MCF 10A (cell line): ENCODE measurements at regions of chr2 and their contacts with region 1.

Region 1: DNA sequence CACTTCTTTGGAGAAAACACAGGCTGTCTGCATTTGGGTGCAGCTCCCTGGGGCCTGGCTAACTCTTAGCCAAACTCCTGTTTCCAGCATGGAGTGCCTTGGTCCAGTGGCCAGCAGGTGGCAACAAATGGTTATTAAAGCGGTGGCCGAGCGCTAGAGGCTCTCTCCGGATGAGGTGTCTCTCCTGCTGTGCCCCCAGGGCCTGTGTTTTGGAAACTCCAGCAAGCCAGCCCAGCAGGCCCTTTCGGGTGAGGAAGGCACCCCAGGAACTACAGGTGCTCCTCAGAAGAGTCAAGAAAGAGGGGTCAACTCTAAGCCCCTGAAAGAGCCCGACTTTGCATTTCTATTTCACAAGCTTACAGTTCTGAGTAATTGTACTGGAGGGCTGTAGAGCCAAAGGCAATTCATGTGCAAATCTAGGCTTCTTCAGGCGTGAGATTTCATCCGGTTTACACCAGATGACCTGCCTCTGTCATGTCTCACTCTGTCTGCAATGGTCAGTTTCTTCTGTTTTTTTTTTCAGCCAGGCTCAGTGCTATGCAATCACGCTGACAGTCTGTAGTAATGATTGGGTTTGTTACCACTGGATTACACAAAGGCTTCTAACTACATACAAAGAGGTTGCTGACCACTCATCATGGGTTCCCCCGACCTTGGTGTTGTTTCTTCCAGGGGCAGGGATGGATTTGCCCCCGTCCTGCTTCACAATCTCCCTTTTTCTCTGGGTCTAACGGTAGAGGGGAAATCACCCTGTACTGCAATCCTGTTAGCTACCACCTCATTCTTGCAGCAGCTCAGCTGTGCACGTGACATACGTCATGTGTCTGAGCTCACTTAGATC is 7.6 kb upstream of the CHRNA1 start:
- DNase-seq: peak; percentile 86
- H3K4me3 Mint-ChIP-seq: no peak overlapping the region
- H3K27ac Mint-ChIP-seq: no peak overlapping the region
- H3K4me1 Mint-ChIP-seq: no peaks in the 10 kb centered on the region
- H3K27me3 Mint-ChIP-seq: no peaks in the 10 kb centered on the region
- CTCF ChIP-seq: peak; percentile 86

Region 2: DNA sequence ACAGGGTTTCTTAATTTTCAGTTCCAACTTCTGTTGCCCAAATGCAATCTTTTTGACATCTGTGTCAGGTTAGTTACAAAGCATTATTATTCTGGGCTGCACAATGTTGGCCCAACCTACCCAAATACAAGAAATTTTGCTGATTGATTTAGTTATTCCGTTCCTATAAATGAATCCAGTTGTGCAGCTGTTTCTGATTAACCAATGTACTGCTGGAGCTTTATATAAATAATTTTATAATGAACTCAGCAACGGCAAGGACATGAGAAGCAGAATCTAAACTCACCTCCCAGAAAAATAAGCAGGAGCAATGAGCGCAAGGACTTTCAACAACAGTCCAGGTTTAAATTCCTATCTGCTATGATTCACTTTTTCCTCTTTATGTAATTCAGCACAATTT is 98.0 kb before region 1 on chr2:
- CTCF ChIA-PET with region 1: no interaction called
- POLR2A ChIA-PET with region 1: no interaction called
- intact Hi-C with region 1: no loop called
- DNase-seq: no peak
- H3K4me3 Mint-ChIP-seq: no peak overlapping the region
- H3K27ac Mint-ChIP-seq: no peak overlapping the region
- H3K4me1 Mint-ChIP-seq: peaks cover 6% of the 10 kb centered on the region
- H3K27me3 Mint-ChIP-seq: no peaks in the 10 kb centered on the region
- CTCF ChIP-seq: no peak

Region 3: DNA sequence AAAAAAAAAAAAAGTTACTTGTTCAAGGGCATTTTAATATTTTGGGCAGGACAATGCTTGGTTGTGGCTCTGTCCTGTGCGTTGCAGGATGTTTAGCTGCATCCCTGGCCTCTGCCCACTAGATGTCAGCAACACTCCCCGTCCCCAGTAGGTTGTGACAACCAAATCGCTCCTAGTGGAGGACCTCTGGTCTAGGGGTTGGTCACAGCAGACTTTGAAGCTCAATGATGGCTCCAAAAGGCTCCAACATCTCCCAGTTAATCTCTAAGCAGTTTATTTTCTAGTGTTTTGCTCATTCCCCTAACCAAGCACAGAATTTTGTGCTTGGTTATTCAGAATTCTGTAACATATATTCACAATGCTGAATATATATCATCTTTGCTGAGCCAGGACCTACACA is 74.6 kb before region 1 on chr2:
- CTCF ChIA-PET with region 1: interaction called, 10 read pairs
- POLR2A ChIA-PET with region 1: no interaction called
- intact Hi-C with region 1: no loop called
- DNase-seq: peak; percentile 69
- H3K4me3 Mint-ChIP-seq: no peak overlapping the region
- H3K27ac Mint-ChIP-seq: no peak overlapping the region
- H3K4me1 Mint-ChIP-seq: peaks cover 5% of the 10 kb centered on the region
- H3K27me3 Mint-ChIP-seq: no peaks in the 10 kb centered on the region
- CTCF ChIP-seq: peak; percentile 52

Region 4: DNA sequence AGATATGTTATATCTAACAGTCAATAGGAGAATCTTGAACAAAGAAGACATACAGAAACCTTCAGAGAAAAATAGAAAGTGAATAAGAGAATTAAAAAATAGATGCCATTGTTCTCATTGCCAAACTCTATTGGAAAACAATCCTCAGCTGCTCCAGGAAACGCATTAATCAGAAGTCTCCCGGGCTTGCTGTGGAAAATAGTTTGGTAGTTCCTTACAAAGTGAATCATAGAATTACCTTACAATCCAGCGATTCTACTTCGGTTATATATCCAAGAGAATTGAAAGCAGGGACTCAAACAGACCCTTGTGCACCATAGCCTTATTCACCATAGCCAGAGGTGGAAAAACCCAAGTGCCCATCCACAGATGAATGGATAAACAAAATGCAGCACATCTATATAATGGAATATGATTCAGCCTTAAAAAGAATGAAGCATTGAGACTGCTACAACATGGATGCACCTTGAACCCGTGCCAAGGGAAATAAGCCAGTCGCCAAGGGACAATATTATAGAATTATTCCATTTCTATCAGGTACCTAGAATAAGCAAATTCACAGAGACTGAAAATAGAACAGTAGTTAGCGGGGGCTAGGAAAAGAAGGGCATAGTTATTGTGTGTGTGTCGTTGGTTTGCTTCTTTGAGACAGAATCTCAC is 14.3 kb after region 1 on chr2:
- CTCF ChIA-PET with region 1: interaction called, 12 read pairs
- POLR2A ChIA-PET with region 1: interaction called, 6 read pairs
- intact Hi-C with region 1: no loop called
- DNase-seq: no peak
- H3K4me3 Mint-ChIP-seq: no peak overlapping the region
- H3K27ac Mint-ChIP-seq: no peak overlapping the region
- H3K4me1 Mint-ChIP-seq: no peaks in the 10 kb centered on the region
- H3K27me3 Mint-ChIP-seq: no peaks in the 10 kb centered on the region
- CTCF ChIP-seq: no peak

Region 5: DNA sequence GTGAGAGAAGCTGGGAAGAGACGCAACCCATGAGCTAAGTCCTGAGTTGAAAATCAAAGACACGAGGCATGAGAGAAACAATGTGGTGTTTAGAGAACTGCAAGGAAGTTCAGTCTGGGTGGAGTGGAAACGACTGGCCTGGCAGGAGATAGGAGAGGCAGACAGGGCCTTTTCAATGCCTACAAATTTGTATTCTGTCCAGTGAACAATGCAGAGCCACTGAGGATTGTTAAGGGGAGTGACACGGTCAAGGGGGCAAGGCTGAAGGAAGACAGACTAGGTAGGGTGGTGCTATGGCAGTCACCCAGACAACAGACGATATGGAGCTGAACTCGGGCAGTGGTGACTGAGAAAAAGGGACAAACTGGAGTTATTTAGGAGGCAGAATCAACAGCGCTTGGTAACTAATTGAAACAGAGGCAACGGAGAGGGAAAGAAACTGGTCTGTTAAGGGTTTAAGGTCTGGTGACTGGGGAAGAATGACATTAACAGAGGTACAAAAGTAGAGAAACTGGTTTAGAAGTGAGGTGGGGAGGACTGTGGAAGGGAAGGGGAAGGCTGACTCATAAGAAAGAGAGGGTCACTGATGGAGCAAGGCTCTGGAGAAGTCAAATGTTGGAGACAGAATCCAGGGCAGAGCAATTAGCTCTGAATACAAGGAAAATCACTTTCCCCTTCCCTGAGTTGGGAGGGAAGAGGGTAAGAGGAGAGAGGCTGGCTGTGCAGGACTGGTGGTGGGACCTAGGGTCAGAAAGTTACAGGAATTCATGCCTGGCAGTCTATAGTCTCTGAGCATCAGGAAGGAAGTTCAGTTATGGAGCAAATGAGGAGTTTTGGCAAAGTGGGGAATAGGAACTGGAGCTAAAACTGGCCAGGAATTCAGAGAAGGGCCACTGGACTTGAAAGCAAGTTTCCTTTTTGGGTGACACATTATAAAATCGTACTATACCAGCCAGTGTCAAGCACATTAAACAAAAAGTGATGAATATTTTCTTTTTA is 55.8 kb after region 1 on chr2:
- CTCF ChIA-PET with region 1: interaction called, 11 read pairs
- POLR2A ChIA-PET with region 1: interaction called, 3 read pairs
- intact Hi-C with region 1: no loop called
- DNase-seq: no peak
- H3K4me3 Mint-ChIP-seq: peak overlapping the region; percentile 5
- H3K27ac Mint-ChIP-seq: peak overlapping the region; percentile 57
- H3K4me1 Mint-ChIP-seq: peaks cover 28% of the 10 kb centered on the region
- H3K27me3 Mint-ChIP-seq: no peaks in the 10 kb centered on the region
- CTCF ChIP-seq: no peak

Region 6: DNA sequence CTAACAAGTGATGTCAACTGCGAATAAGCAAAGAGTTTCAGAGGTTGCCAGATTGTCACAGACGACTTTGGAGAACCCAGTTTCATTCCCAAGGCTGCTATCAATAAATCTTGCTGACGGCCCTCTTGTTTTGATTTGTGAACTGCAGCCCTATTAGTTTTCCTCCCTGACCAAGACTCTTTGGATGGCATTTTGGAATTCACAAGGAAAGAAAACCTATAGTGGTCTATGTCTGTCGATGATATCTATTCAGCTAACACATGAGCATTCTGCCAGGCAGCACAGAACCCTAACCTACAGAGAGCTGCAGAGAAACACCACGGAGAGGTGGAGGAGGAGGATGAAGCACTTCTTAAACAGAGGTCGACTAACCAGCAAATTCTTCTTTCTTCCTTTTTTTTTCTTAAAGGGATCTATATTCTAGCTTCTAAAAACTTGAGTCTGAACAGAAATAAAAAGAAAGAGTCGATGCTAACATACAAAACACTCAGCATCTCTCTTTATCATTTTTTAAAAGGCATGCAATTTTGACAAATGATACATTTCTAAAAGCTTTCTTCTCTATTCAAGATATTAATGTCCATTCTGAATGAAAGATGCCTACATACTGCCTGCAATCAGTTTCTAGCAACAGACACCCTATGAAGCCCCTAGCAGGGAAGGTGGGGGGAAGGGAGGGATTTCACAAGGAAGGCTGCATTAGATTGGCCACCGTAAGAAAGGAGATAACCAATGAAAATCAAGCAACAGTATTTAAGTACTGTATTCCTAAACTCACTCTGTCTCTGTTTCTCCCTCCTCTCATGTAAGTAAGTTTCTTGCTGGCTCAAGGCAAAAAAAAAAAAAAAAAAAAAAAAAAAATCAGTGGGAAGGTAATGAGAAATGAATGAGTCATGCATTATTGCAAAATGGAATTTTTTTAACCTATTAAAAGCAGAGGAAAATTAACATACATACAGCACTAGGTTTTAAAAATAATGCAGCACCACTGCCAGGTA is 75.4 kb after region 1 on chr2:
- CTCF ChIA-PET with region 1: interaction called, 7 read pairs
- POLR2A ChIA-PET with region 1: interaction called, 5 read pairs
- intact Hi-C with region 1: loop called (anchors 5 kb)
- DNase-seq: peak; percentile 91
- H3K4me3 Mint-ChIP-seq: peak overlapping the region; percentile 76
- H3K27ac Mint-ChIP-seq: peak overlapping the region; percentile 78
- H3K4me1 Mint-ChIP-seq: peaks cover 33% of the 10 kb centered on the region
- H3K27me3 Mint-ChIP-seq: no peaks in the 10 kb centered on the region
- CTCF ChIP-seq: no peak

Region 7: GRCh38 chr2:174977360-174977759 is 205.5 kb after region 1 on chr2:
- CTCF ChIA-PET with region 1: interaction called, 259 read pairs
- POLR2A ChIA-PET with region 1: interaction called, 4 read pairs
- intact Hi-C with region 1: no loop called
- DNase-seq: peak; percentile 80
- H3K4me3 Mint-ChIP-seq: no peak overlapping the region
- H3K27ac Mint-ChIP-seq: peak overlapping the region; percentile 28
- H3K4me1 Mint-ChIP-seq: peaks cover 17% of the 10 kb centered on the region
- H3K27me3 Mint-ChIP-seq: no peaks in the 10 kb centered on the region
- CTCF ChIP-seq: no peak

Region 8: DNA sequence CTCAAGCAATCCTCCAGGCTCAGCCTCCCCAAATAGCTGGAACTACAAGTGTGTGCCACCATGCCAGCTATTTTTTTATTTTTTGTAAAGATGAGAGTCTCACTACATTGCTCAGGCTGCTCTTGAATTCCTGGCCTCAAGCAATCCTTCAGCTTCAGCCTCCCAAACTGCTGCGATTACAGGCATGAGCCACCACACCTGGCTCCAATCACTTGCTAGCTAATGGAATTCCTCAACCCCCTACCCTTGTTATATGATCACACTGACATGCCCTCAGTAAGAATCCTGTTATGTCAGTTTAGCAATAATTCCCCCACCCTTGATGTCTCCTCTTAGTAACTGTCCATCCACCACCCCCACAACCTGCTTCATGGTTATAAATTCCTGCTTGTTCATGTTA is 221.0 kb after region 1 on chr2:
- CTCF ChIA-PET with region 1: interaction called, 95 read pairs
- POLR2A ChIA-PET with region 1: interaction called, 3 read pairs
- intact Hi-C with region 1: no loop called
- DNase-seq: no peak
- H3K4me3 Mint-ChIP-seq: no peak overlapping the region
- H3K27ac Mint-ChIP-seq: no peak overlapping the region
- H3K4me1 Mint-ChIP-seq: peaks cover 9% of the 10 kb centered on the region
- H3K27me3 Mint-ChIP-seq: no peaks in the 10 kb centered on the region
- CTCF ChIP-seq: no peak